ENCODE measurements at regions of chr17 and their contacts with region 1.

Region 1: DNA sequence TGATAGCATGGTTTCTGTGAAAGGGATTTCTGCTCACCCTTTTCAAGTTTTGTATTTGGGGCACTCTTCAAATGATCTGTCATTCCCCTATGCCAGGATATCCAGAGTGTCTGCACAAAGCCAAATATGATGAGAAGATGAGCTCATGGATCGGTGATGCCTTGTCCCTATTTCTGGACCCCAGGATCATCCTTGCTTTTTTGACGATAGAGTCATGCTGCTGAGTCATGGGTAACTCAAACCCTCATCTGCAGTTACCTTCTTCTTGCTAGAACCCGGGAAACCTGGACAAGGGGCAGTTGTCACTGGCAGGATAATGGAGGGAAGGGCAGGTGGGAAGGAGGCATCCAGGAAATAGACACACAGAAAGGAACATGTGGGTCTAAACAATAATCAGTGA is 17.8 kb upstream of the MAPT start:
- DNase-seq: no peak
- H3K4me3 ChIP-seq: no peak overlapping the region
- H3K27ac ChIP-seq: no peak overlapping the region
- H3K4me1 ChIP-seq: no peaks in the 10 kb centered on the region
- H3K27me3 ChIP-seq: peaks cover 0 to 61% of the 10 kb centered on the region in 2 donors
- CTCF ChIP-seq: no peak

Region 2: DNA sequence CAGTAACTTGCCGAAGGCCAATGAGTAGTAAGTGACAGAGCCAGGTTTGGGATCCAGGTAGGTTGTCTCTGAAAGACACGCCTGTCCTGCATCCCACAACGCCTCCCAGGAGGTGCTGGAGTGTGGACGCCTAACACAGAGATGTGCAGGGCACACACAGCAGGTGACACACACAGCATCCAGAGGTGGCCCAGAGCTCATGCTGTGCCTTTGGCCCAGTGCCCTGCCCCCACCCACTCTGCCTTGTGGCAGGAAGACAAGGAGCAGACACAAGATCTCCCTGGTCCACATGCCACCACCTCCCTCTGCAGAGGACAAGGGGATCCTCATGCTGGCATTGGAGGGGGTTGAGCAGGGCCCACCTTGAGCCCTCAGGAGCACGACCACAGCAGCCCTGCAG is 107.8 kb after region 1 on chr17:
- intact Hi-C with region 1: no loop called
- DNase-seq: no peak
- H3K4me3 ChIP-seq: no peak overlapping the region
- H3K27ac ChIP-seq: no peak overlapping the region
- H3K4me1 ChIP-seq: no peaks in the 10 kb centered on the region
- H3K27me3 ChIP-seq: peaks cover 0 to 8% of the 10 kb centered on the region in 2 donors
- CTCF ChIP-seq: no peak

Region 3: DNA sequence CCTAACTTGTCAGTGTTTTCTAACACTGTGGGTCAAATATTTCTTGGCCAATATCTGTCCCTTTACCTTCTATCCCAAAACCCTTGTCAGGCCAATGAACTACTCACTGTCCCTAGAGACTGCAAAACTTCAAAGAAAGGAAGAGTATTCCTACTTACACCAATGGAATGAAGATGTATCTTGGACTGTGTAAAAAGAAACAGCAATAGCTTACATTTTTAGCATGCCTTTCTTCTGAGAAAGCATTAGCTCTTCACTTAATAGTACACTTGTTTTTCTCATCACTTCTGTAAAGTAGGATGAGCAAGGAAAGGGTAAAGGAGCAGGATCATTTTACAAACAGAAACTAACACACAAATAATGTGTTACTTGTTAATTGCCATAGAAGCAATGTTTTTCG is 196.5 kb after region 1 on chr17:
- intact Hi-C with region 1: loop called (anchors 5 kb)
- DNase-seq: no peak
- H3K4me3 ChIP-seq: no peak overlapping the region
- H3K27ac ChIP-seq: no peak overlapping the region
- H3K4me1 ChIP-seq: peaks cover 0 to 23% (median 9%) of the 10 kb centered on the region in 4 donors
- H3K27me3 ChIP-seq: no peaks in the 10 kb centered on the region
- CTCF ChIP-seq: no peak